Activated CD4-positive, alpha-beta memory T cell treated with anti-CD3 and anti-CD28 coated beads, Interleukin-2, amount 10 ng/mL, durations not matched to agents 7 days and 5 days (primary cell): ENCODE measurements at regions of chr20 and their contacts with region 1.

Region 1: GRCh38 chr20:45293041-45294002 is 13.3 kb upstream of the RBPJL start:
- DNase-seq: peak; percentile 84
- H3K4me3 Mint-ChIP-seq: peak overlapping the region; percentile 64
- H3K27ac Mint-ChIP-seq: no peak overlapping the region
- H3K4me1 Mint-ChIP-seq: peaks cover 10% of the 10 kb centered on the region
- H3K27me3 Mint-ChIP-seq: peaks cover 39% of the 10 kb centered on the region

Region 2: DNA sequence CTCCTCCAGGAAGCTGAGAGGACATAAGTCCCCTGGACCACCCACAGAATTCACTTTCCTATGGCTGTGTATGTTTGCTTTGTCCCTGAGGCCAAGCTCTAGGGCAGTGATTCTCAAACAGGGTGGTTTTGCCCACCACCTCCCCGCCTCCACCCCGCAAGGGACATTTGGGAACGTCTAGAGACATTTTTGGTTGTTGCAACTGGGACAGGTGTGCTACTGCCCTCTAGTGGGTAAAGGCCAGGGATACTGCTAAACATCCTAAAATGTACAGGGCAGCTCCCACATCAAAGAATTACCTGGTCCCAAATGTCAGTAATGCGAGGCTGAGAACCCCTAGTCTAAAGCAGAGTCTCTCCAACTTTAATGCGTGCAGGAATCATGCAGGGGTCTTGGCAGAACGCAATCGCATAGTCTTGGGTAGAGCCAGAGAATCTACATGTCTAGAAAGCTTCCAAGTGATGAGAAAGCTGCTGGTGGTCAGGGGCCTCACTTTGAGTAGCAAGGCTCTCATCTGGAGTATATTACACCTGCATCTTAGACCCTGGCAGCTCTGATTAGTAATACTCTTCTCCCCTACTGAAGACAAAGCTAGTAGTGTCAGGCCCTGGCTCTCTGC is 197.5 kb before region 1 on chr20:
- CTCF ChIA-PET with region 1: interaction called, 52 read pairs
- POLR2A ChIA-PET with region 1: interaction called, 4 read pairs
- DNase-seq: peak; percentile 62
- H3K4me3 Mint-ChIP-seq: no peak overlapping the region
- H3K27ac Mint-ChIP-seq: no peak overlapping the region
- H3K4me1 Mint-ChIP-seq: peaks cover 9% of the 10 kb centered on the region
- H3K27me3 Mint-ChIP-seq: peaks cover 35% of the 10 kb centered on the region

Region 3: DNA sequence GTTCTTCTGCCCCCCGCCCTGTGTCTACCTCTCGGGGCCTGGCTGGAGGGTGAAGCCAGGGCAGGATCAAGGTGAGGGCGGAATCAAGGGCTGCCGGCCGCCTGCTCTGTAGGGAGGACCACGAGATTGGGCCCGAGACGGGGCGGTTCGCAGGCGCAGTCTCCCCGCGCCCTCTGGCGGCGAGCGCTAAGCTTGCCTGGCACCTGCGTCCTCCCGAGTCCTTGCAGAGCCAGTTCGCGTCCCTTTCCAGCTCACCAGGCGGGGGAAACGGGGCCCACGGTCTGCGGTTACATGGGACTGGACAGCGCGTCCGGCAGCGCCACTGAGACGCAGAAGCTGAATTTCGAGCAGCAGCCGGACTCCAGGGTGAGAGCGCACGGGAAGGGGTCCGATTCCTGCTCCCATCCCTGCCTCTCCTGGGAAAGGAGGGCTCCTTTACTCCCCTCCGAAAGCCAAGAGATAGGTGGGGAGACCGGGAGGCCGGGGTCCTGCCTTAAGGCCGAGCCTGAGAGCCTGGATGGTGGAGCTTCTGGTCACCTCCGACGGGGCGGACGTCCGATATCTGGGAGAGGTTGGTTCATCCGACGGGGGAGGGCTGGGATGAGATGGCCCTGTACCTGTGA is 18.4 kb after region 1 on chr20:
- CTCF ChIA-PET with region 1: interaction called, 31 read pairs
- POLR2A ChIA-PET with region 1: interaction called, 3 read pairs
- DNase-seq: peak; percentile 69
- H3K4me3 Mint-ChIP-seq: no peak overlapping the region
- H3K27ac Mint-ChIP-seq: no peak overlapping the region
- H3K4me1 Mint-ChIP-seq: peaks cover 13% of the 10 kb centered on the region
- H3K27me3 Mint-ChIP-seq: peaks cover 33% of the 10 kb centered on the region

Region 4: DNA sequence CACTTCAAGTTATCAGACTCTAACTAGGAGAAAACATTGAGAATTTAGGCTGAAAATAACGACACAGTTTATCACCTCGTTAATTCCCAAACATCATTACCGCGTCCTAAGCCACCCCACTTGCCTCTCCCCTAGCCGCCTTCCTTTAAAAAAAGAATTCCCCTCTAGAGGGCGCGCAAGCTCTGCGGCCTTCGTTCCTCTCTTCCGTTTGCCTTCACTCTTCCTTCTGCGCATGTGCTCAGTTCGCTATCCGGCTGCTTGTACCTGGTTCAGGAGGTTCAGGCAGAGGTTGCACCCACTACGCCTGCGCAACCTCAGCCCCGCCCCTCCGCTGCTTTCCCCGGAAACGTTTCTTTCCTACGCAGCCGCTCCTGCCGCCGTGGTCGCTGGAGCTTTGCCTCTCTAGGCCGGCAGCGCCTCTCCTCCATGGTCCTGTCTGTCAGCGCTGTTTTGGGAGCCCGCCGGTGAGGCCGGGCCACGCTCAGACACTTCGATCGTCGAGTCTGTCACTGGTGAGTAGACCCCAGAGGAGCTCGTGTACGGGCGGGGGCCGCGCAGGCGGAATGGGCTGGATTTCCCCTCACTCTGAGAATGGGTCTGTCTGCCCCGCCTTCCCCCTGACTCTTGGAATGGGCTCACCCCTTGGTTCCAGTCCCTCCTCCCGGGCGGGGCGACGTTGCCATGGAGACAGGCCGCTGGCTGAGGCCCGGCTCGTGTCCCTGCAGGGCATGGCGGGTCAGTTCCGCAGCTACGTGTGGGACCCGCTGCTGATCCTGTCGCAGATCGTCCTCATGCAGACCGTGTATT is 69.7 kb after region 1 on chr20 and contains the start of gene SYS1:
- CTCF ChIA-PET with region 1: interaction called, 12 read pairs
- POLR2A ChIA-PET with region 1: interaction called, 7 read pairs
- DNase-seq: peak; percentile 98
- H3K4me3 Mint-ChIP-seq: peak within 1 kb of the TSS; percentile 92
- H3K27ac Mint-ChIP-seq: peak within 1 kb of the TSS; percentile 91
- H3K4me1 Mint-ChIP-seq: peaks cover 65% of the 10 kb centered on the region
- H3K27me3 Mint-ChIP-seq: no peaks in the 10 kb centered on the region
- total RNA-seq, gene SYS1: 22.1 to 24.2 TPM

Region 5: GRCh38 chr20:45592574-45593189 is 299.4 kb after region 1 on chr20:
- CTCF ChIA-PET with region 1: no interaction called
- POLR2A ChIA-PET with region 1: no interaction called
- DNase-seq: no peak
- H3K4me3 Mint-ChIP-seq: no peak overlapping the region
- H3K27ac Mint-ChIP-seq: no peak overlapping the region
- H3K4me1 Mint-ChIP-seq: no peaks in the 10 kb centered on the region
- H3K27me3 Mint-ChIP-seq: peaks cover 36% of the 10 kb centered on the region